ENCODE measurements at regions of chr20 and their contacts with region 1.

Region 1: GRCh38 chr20:41136680-41137613 is at the start of gene PLCG1:
- DNase-seq: peak; percentile 83
- H3K4me3 Mint-ChIP-seq: peak within 1 kb of the TSS; percentile 95
- H3K27ac Mint-ChIP-seq: peak within 1 kb of the TSS; percentile 91
- H3K4me1 Mint-ChIP-seq: peaks cover 71% of the 10 kb centered on the region
- H3K27me3 Mint-ChIP-seq: no peaks in the 10 kb centered on the region
- total RNA-seq, gene PLCG1: 203 and 205 TPM in 2 replicates

Region 2: DNA sequence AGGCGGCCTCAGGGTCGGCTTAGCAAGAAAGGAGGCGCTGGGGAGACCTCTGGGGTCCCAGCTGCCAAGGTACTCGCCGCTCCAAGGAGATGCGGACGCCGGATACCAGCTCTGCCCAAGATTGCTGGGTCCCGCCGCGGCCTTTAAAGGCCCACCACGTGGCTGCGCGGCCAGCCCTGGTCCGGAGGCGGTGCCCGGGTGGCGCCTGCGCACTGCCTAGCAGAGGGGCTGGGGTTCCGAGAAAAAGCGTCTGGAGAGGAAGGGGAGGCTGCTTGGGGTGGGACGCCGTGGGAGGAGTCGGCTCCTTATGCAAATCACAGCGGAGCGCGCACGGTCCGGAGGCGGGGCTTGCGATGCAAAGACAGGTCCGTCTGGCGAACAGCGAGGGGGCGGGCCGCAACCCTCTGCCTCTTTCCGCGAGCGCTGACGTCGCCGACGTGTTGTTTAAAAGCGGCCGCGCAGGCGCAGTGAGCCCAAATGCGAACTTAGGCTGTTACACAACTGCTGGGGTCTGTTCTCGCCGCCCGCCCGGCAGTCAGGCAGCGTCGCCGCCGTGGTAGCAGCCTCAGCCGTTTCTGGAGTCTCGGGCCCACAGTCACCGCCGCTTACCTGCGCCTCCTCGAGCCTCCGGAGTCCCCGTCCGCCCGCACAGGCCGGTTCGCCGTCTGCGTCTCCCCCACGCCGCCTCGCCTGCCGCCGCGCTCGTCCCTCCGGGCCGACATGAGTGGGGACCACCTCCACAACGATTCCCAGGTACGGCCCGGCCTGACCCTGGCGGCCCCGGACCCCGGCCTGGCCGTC is 108.4 kb before region 1 on chr20 and contains the start of gene TOP1:
- intact Hi-C with region 1: loop called (anchors 1 kb)
- DNase-seq: peak; percentile 99
- H3K4me3 Mint-ChIP-seq: peak within 1 kb of the TSS; percentile 94
- H3K27ac Mint-ChIP-seq: peak within 1 kb of the TSS; percentile 94
- H3K4me1 Mint-ChIP-seq: peaks cover 49% of the 10 kb centered on the region
- H3K27me3 Mint-ChIP-seq: no peaks in the 10 kb centered on the region
- total RNA-seq, gene TOP1: 120 and 123 TPM in 2 replicates

Region 3: DNA sequence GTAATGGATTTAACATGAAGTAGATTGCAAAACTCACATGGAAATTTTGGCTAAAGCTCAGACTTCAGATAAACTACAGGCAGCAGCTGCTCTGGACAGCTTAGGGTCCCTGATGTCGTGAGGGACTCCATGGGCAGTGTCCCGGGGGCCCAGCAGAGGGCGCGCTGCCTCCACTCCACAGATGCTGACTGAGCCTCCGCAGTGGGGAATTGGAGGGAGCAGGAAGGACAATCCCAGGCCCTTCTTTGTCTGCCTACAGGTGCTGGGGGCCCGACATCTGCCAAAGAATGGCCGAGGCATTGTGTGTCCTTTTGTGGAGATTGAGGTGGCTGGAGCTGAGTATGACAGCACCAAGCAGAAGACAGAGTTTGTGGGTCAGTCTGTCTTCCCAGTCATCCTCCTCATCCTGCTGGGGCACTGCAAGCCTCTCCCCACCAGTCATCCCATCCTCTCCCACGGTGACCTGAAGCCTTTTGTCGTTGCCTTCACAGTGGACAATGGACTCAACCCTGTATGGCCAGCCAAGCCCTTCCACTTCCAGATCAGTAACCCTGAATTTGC is 36.3 kb after region 1 on chr20:
- intact Hi-C with region 1: loop called (anchors 5 kb)
- DNase-seq: peak; percentile 35
- H3K4me3 Mint-ChIP-seq: no peak overlapping the region
- H3K27ac Mint-ChIP-seq: no peak overlapping the region
- H3K4me1 Mint-ChIP-seq: peaks cover 7% of the 10 kb centered on the region
- H3K27me3 Mint-ChIP-seq: no peaks in the 10 kb centered on the region

Region 4: DNA sequence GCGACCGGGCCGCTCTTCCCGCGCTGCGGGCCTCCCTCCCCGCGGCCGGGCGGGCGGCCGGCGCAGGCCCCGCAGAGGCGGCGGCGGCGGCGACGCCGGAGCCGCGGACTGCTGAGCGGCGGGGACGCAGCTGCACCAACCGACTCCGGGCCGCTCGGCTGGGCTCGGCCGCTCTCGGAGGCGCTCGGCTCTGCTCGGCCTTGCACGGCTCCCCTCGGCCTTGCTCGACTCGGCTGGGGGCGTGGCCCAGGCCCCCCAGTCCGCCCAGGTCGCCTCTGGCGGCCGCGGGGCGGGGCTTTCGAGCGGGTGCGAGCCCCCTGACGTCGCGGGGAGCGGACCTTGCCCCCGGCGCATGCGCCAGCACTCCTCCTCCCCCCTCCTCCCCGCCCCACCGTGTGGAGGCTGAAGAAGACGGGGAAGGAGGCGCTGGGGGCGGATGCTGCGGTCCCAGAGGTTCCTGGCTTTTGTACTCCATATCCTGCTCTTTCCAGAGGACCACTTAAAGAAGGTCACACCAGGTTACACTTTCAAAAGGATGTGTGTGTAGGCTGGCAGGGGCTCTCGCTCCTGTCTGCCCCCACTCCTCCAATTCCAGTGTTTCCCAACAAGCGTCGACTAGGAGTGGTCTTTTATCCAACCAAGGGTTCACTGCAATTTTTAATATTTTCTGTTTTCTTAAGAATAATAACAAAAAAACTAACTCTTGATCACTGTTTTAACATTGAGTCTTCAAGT is 180.8 kb after region 1 on chr20 and contains the start of gene ZHX3:
- intact Hi-C with region 1: loop called (anchors 1 kb)
- DNase-seq: peak; percentile 95
- H3K4me3 Mint-ChIP-seq: peak within 1 kb of the TSS; percentile 88
- H3K27ac Mint-ChIP-seq: peak within 1 kb of the TSS; percentile 82
- H3K4me1 Mint-ChIP-seq: peaks cover 11% of the 10 kb centered on the region
- H3K27me3 Mint-ChIP-seq: peaks cover 5% of the 10 kb centered on the region
- total RNA-seq, gene ZHX3: 9.5 and 11.9 TPM in 2 replicates

Region 5: GRCh38 chr20:41352108-41352507 is 215.2 kb after region 1 on chr20:
- intact Hi-C with region 1: no loop called
- DNase-seq: no peak
- H3K4me3 Mint-ChIP-seq: no peak overlapping the region
- H3K27ac Mint-ChIP-seq: no peak overlapping the region
- H3K4me1 Mint-ChIP-seq: no peaks in the 10 kb centered on the region
- H3K27me3 Mint-ChIP-seq: peaks cover 5% of the 10 kb centered on the region

Region 6: GRCh38 chr20:41436679-41437078 is 299.7 kb after region 1 on chr20:
- intact Hi-C with region 1: loop called (anchors 5 kb)
- DNase-seq: no peak
- H3K4me3 Mint-ChIP-seq: peak overlapping the region; percentile 6
- H3K27ac Mint-ChIP-seq: peak overlapping the region; percentile 38
- H3K4me1 Mint-ChIP-seq: peaks cover 75% of the 10 kb centered on the region
- H3K27me3 Mint-ChIP-seq: no peaks in the 10 kb centered on the region

Region 7: GRCh38 chr20:41693136-41693979 is 556.4 kb after region 1 on chr20:
- intact Hi-C with region 1: loop called (anchors 2 kb)
- DNase-seq: peak; percentile 73
- H3K4me3 Mint-ChIP-seq: peak overlapping the region; percentile 93
- H3K27ac Mint-ChIP-seq: peak overlapping the region; percentile 94
- H3K4me1 Mint-ChIP-seq: peaks cover 13% of the 10 kb centered on the region
- H3K27me3 Mint-ChIP-seq: peaks cover 3% of the 10 kb centered on the region

Measured in activated T-helper 1 cell treated with anti-CD3 and anti-CD28 coated beads, Interleukin-12 subunit alpha, Interleukin-12 subunit beta, Interleukin-2, Interleukin-4 antibody, amounts not matched to agents 30 ng/mL and 10 ng/mL and 1 ng/mL, durations not matched to agents 14 hours and 24 hours and 36 hours (primary cell).